Activated naive CD8-positive, alpha-beta T cell treated with anti-CD3 and anti-CD28 coated beads, Interleukin-2, amount 10 ng/mL, durations not matched to agents 7 days and 5 days (primary cell): ENCODE measurements at regions of chr5 and their contacts with region 1.

Region 1: GRCh38 chr5:52799983-52800393 is 12.3 kb downstream of the ITGA1 start:
- DNase-seq: peak; percentile 97
- ATAC-seq: peak; percentile 89
- H3K4me3 Mint-ChIP-seq: peak overlapping the region; percentile 97
- H3K27ac Mint-ChIP-seq: peak overlapping the region; percentile 97
- H3K4me1 Mint-ChIP-seq: peaks cover 42% of the 10 kb centered on the region
- H3K27me3 Mint-ChIP-seq: no peaks in the 10 kb centered on the region

Region 2: GRCh38 chr5:52725065-52725746 is 74.8 kb before region 1 on chr5:
- POLR2A ChIA-PET with region 1: interaction called, 14 read pairs
- DNase-seq: no peak
- ATAC-seq: peak; percentile 99
- H3K4me3 Mint-ChIP-seq: peak overlapping the region; percentile 80
- H3K27ac Mint-ChIP-seq: peak overlapping the region; percentile 94
- H3K4me1 Mint-ChIP-seq: peaks cover 38% of the 10 kb centered on the region
- H3K27me3 Mint-ChIP-seq: no peaks in the 10 kb centered on the region

Region 3: DNA sequence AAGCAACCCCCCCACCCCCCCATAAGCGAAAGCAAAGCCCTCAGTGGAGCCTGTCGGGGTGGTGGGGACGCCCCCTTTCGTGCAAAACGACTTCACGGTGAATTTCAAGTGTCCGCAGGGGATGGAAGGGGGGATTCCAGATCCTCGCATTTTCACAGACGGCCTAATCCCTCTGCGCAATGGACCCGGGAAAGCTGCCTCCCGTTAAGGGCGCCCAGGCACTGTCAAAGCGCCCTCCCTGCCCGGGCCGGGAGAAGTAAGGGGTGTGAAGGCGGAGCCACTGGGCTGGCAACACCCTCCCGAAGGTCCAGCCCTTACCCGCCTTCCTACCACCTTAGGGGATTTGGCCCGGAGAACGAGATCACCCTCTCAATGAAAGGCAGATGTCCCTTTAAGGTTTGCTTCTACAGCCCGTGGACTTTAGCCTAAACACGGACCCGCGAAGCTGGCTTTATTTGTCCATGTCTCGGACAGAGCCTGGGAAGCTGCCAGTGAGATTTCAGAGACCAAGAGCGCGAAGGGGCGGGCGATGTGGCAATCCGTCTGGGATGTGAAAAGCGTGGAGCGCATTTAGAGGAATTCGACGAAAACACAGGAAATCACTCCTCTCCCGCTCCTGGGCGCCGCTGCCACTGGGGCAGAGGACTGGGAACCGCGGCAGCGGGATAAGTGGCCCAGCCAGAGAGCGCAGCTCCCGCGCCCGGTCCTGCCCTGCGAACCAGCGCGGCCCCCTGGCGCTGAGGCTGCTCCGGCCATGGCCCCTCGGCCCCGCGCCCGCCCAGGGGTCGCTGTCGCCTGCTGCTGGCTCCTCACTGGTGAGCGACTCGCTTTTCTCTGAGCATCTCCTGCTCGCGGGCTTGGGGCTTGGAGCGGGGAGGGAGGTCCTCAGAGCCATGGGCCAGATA is 12.1 kb before region 1 on chr5 and contains the starts of genes ITGA1 and PELO:
- POLR2A ChIA-PET with region 1: interaction called, 21 read pairs
- DNase-seq: peak; percentile 69
- ATAC-seq: peak; percentile 87
- H3K4me3 Mint-ChIP-seq: peak within 1 kb of the TSS; percentile 90
- H3K27ac Mint-ChIP-seq: peak within 1 kb of the TSS; percentile 78
- H3K4me1 Mint-ChIP-seq: peaks cover 34% of the 10 kb centered on the region
- H3K27me3 Mint-ChIP-seq: no peaks in the 10 kb centered on the region
- total RNA-seq, gene ITGA1: 21.7 to 23.6 TPM
- total RNA-seq, gene PELO: 24.0 to 24.2 TPM

Region 4: DNA sequence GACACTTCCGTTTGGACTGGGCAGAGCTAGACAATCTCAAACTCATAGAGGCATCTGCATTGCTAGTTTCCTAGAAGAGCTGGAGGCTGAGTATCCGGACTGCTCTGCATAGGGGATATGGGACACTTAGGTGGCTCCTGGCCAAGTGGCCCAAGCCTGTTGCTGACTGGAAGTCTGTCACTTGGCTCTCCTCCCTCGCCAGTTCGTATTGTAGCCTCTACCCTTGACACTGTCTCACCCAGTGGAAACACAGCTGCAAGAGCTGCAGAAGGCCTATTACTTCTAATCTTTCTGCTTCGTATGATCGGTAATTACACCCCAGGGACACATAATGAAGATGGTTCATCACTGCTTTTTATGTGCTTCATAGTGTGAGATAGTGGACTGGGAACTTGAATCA is 22.4 kb after region 1 on chr5:
- POLR2A ChIA-PET with region 1: no interaction called
- DNase-seq: no peak
- ATAC-seq: no peak
- H3K4me3 Mint-ChIP-seq: no peak overlapping the region
- H3K27ac Mint-ChIP-seq: no peak overlapping the region
- H3K4me1 Mint-ChIP-seq: peaks cover 8% of the 10 kb centered on the region
- H3K27me3 Mint-ChIP-seq: no peaks in the 10 kb centered on the region

Region 5: DNA sequence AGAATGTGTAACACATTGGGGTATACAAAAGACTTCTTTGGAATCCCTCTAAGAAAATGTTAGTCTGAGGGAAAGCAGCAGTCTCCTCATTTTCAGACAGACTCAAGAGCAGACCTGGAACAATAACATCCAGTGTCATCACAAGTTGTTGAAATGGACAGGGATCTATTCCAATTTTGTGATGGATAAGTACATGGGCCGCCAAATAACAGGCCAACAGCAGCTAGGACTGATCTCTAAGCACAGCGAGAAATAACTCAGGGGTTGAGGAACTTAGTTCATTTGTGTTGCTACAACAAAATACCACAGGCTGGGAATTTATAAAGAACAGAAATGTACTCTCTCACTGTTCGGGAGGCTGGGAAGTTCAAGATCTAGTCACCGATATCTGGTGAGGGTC is 181.5 kb after region 1 on chr5:
- POLR2A ChIA-PET with region 1: no interaction called
- DNase-seq: no peak
- ATAC-seq: no peak
- H3K4me3 Mint-ChIP-seq: no peak overlapping the region
- H3K27ac Mint-ChIP-seq: no peak overlapping the region
- H3K4me1 Mint-ChIP-seq: peaks cover 4% of the 10 kb centered on the region
- H3K27me3 Mint-ChIP-seq: peaks cover 39% of the 10 kb centered on the region